ENCODE measurements at regions of chr6 and their contacts with region 1.

Region 1: GRCh38 chr6:34132486-34133185 is 13.3 kb downstream of the GRM4 start:
- DNase-seq: peak in 1 of 2 experiments; percentile 91
- H3K4me3 ChIP-seq: peak overlapping the region in 3 of 4 experiments; percentile 10 to 50 (median 21); a peak in 6 of 8 replicates
- H3K27ac ChIP-seq: no peak overlapping the region
- H3K4me1 ChIP-seq: peaks cover 18 to 51% (median 39%) of the 10 kb centered on the region in 4 experiments
- H3K27me3 ChIP-seq: no peaks in the 10 kb centered on the region
- CTCF ChIP-seq: no peak
- EP300 ChIP-seq: no peak
- POLR2A ChIP-seq: no peak
- RAD21 ChIP-seq: peak; percentile 13 to 18; a peak in 2 of 4 replicates

Region 2: GRCh38 chr6:33788694-33789549 is 343.7 kb before region 1 on chr6 and contains the start of gene LEMD2:
- CTCF ChIA-PET with region 1: no interaction called
- POLR2A ChIA-PET with region 1: no interaction called
- DNase-seq: peak; percentile 71 to 95
- H3K4me3 ChIP-seq: peak within 1 kb of the TSS; percentile 59 to 94 (median 74)
- H3K27ac ChIP-seq: peak within 1 kb of the TSS; percentile 76
- H3K4me1 ChIP-seq: peaks cover 18 to 63% (median 30%) of the 10 kb centered on the region in 4 experiments
- H3K27me3 ChIP-seq: no peaks in the 10 kb centered on the region
- CTCF ChIP-seq: 0 out of 4 replicates have a peak, but pooled peaks of 1 of the 3 experiments have one; percentile 2
- EP300 ChIP-seq: no peak
- POLR2A ChIP-seq: peak in 1 of 2 experiments; percentile 52; a peak in 2 of 3 replicates
- RAD21 ChIP-seq: no peak; a peak in 1 of 4 replicates
- total RNA-seq, gene LEMD2: 54.1 and 57.3 TPM in 2 replicates

Region 3: GRCh38 chr6:34074064-34074742 is 58.4 kb before region 1 on chr6:
- CTCF ChIA-PET with region 1: interaction called, 14 read pairs
- POLR2A ChIA-PET with region 1: interaction called, 5 read pairs
- DNase-seq: no peak
- H3K4me3 ChIP-seq: no peak overlapping the region
- H3K27ac ChIP-seq: no peak overlapping the region
- H3K4me1 ChIP-seq: peaks cover 0 to 18% (median 2%) of the 10 kb centered on the region in 4 experiments; a peak in 5 of 7 replicates
- H3K27me3 ChIP-seq: no peaks in the 10 kb centered on the region; a peak in 1 of 7 replicates
- CTCF ChIP-seq: peak in 2 of 3 experiments; percentile 61 to 82; a peak in 3 of 4 replicates
- EP300 ChIP-seq: no peak
- POLR2A ChIP-seq: no peak
- RAD21 ChIP-seq: peak; percentile 53 to 66

Region 4: DNA sequence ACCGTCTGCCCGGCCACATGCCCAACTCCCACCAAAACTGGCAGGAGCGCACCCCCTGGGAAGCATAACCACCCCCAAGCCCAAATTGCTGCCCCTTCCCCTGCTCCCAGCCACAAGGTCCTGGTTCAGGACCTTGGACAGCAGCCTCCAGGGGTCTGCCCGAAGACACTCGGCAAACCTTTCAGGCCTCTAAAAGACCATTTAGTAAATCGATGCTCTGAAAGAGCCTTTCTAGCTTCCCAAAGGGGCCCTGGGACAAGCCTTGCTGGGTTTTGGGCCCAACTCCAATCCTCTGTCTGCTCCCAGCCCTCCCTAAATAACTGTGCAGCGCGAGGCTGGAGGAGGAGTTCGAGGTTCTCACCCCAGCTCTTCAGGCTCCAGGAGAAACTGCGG is 17.2 kb before region 1 on chr6:
- CTCF ChIA-PET with region 1: interaction called, 14 read pairs
- POLR2A ChIA-PET with region 1: interaction called, 9 read pairs
- DNase-seq: peak in 1 of 2 experiments; percentile 85
- H3K4me3 ChIP-seq: no peak overlapping the region
- H3K27ac ChIP-seq: no peak overlapping the region
- H3K4me1 ChIP-seq: peaks cover 0 to 1% (median 0%) of the 10 kb centered on the region in 4 experiments; a peak in 1 of 7 replicates
- H3K27me3 ChIP-seq: no peaks in the 10 kb centered on the region
- CTCF ChIP-seq: no peak
- EP300 ChIP-seq: no peak
- POLR2A ChIP-seq: no peak
- RAD21 ChIP-seq: peak in 1 of 2 experiments; percentile 14; a peak in 1 of 4 replicates

Region 5: DNA sequence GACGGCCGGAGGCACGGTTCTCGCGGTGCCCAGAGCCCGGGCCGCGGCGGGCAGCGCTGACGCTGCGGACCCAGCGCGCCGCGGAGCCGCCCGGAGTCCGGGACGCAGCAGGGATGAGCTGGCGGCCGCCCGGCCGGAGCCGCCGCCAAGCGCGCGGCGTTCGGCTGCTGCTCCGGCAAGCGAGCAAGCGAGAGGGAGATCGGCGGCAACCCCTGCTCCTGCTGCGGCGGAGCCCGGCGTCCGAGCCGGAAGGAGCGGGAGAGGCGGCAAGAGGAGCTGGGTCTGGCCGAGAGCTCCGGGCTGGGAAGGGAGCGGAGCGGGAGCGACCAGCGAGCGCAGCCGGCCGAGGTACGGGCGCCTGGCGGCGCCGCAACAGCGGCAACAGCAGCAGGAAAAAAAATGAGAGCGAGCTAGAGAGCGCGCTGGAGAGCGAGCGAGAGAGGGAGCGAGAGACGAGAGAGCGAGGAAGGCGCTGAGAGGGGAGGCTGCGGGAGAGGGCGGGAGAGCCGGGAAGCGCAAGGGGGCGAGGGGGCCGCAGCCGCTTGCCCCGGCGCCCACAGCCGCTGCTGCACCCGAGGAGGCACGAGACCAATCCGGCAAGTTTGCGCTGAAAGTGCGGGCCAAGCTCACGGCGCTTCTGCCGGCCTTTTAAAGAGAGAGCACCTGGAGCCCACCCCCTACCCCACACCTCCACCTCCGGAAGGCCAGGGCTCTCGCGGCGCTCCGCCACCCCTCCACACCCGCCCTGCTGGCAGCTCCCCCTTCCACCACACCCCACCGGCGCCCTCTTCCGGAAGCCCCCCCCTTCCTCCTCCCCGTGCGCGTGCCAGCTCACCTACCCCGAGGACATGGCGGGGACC is 12.8 kb after region 1 on chr6:
- CTCF ChIA-PET with region 1: interaction called, 128 read pairs
- POLR2A ChIA-PET with region 1: interaction called, 27 read pairs
- DNase-seq: peak in 1 of 2 experiments; percentile 80
- H3K4me3 ChIP-seq: peak overlapping the region; percentile 51 to 77 (median 64)
- H3K27ac ChIP-seq: no peak overlapping the region
- H3K4me1 ChIP-seq: peaks cover 12 to 57% (median 47%) of the 10 kb centered on the region in 4 experiments
- H3K27me3 ChIP-seq: peaks cover 0 to 46% (median 31%) of the 10 kb centered on the region in 4 experiments; a peak in 6 of 7 replicates
- CTCF ChIP-seq: no peak
- EP300 ChIP-seq: no peak
- POLR2A ChIP-seq: no peak
- RAD21 ChIP-seq: no peak; a peak in 1 of 4 replicates